Calu3 (cell line): ENCODE measurements at regions of chr16 and their contacts with region 1.

Region 1: GRCh38 chr16:74556375-74556922 is 50.5 kb downstream of the GLG1 start:
- DNase-seq: peak; percentile 68
- H3K4me3 Mint-ChIP-seq: no peak overlapping the region
- H3K27ac Mint-ChIP-seq: no peak overlapping the region
- H3K4me1 Mint-ChIP-seq: peaks cover 21% of the 10 kb centered on the region
- H3K27me3 Mint-ChIP-seq: no peaks in the 10 kb centered on the region
- CTCF ChIP-seq: no peak

Region 2: DNA sequence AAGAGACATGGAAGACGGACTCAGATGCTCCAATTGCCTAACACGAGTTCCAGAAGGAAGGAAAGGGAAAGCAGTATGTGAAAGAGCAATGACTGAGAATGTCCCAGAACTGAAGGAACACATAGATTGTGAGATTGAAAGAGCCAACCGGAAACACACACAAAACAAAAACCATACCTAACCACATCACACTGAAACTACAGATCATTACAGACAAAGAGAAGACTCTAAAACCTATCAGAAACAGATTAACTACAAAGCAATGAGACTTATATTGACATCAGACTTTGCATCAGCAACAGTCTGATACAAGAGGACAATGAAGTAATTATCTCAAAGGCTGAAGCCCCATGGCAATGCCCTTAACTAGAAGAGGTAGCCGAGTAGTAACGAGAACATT is 89.6 kb before region 1 on chr16:
- CTCF ChIA-PET with region 1: no interaction called
- intact Hi-C with region 1: no loop called
- DNase-seq: no peak
- H3K4me3 Mint-ChIP-seq: no peak overlapping the region
- H3K27ac Mint-ChIP-seq: no peak overlapping the region
- H3K4me1 Mint-ChIP-seq: no peaks in the 10 kb centered on the region
- H3K27me3 Mint-ChIP-seq: no peaks in the 10 kb centered on the region
- CTCF ChIP-seq: no peak

Region 3: DNA sequence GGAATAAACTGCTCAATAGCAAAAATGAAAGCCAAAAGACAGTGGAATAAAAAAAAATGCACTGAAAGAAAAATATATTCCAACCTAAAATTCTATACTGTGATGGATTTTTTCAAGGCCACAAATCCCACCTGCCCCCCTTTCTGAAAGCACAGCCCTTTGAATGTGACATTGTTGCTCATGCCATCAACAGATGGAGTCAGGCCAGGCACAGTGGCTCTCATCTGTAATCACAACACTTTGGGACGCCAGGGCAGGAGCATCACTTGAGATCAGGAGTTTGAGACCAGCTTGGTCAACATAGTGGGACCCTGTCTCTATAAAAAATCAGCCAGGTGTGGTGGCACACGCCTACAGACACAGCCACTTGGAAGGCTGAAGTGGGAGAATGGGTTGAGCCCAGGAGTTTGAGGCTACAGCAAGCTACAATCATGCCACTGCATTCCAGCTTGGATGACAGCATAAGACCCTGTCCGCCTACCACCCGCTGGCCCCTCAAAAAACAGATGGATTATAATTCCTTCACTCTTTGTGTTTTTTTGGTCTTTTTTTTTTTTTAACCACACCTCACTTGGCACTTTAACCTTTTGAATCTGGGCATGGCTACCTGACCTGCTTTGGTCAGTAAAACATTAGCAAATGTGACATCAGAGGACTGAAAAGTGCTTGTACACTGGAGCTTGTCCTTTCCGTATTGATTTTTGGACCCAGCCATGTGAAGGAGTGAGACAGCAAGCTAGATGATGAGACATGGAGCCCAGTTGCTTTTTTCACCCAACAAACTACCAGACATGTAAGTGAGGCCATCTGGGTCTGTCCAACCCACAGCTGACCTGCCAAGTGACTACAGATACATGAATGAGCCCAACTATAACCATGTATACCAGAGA is 14.2 kb after region 1 on chr16:
- CTCF ChIA-PET with region 1: interaction called, 15 read pairs
- intact Hi-C with region 1: no loop called
- DNase-seq: peak; percentile 23
- H3K4me3 Mint-ChIP-seq: peak overlapping the region; percentile 42
- H3K27ac Mint-ChIP-seq: peak overlapping the region; percentile 68
- H3K4me1 Mint-ChIP-seq: peaks cover 55% of the 10 kb centered on the region
- H3K27me3 Mint-ChIP-seq: no peaks in the 10 kb centered on the region
- CTCF ChIP-seq: no peak

Region 4: GRCh38 chr16:74601126-74601871 is 44.9 kb after region 1 on chr16:
- CTCF ChIA-PET with region 1: interaction called, 3 read pairs
- intact Hi-C with region 1: loop called (anchors 5 kb)
- DNase-seq: peak; percentile 30
- H3K4me3 Mint-ChIP-seq: no peak overlapping the region
- H3K27ac Mint-ChIP-seq: no peak overlapping the region
- H3K4me1 Mint-ChIP-seq: peaks cover 47% of the 10 kb centered on the region
- H3K27me3 Mint-ChIP-seq: no peaks in the 10 kb centered on the region
- CTCF ChIP-seq: no peak